Spleen (tissue), 13 donors: ENCODE measurements at regions of chr15 and their contacts with region 1.

Region 1: GRCh38 chr15:84929744-84930371 is 45.4 kb downstream of the SLC28A1 start:
- DNase-seq: no peak
- H3K4me3 ChIP-seq: no peak overlapping the region
- H3K27ac ChIP-seq: no peak overlapping the region
- H3K4me1 ChIP-seq: peaks cover 0 to 11% (median 4%) of the 10 kb centered on the region in 6 donors
- H3K27me3 ChIP-seq: no peaks in the 10 kb centered on the region
- CTCF ChIP-seq: no peak
- POLR2A ChIP-seq: no peak

Region 2: DNA sequence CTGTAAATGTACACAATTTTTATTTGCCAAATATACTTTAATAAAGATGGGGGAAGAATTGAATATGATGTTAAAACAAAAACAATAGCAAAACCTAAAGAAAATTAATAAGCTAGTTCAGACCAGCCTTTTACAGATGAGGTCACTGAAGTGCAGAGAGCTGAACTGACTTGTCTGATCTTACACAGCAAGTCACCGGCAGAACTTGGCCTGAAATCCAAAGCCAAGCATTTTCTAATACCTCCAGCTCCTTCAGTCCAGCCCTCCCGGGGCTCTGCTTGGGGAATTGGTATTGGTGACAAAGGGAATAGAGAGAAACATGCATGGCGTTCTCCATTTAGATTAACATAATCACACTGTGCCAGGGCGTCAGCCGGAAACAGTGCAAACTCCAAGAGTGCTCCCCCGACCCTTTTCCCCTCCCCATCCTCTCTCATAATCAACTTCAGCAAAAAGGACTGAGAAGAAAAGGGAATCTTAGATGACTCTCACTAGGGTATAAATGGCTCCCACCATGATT is 343.2 kb before region 1 on chr15:
- intact Hi-C with region 1: loop called (anchors 2 kb)
- DNase-seq: no peak
- H3K4me3 ChIP-seq: no peak overlapping the region
- H3K27ac ChIP-seq: no peak overlapping the region
- H3K4me1 ChIP-seq: peaks cover 0 to 11% (median 9%) of the 10 kb centered on the region in 6 donors
- H3K27me3 ChIP-seq: peaks cover 0 to 14% (median 0%) of the 10 kb centered on the region in 7 donors
- CTCF ChIP-seq: no peak
- POLR2A ChIP-seq: no peak

Region 3: GRCh38 chr15:84883433-84883832 is 46.4 kb before region 1 on chr15:
- intact Hi-C with region 1: no loop called
- DNase-seq: no peak
- H3K4me3 ChIP-seq: no peak overlapping the region
- H3K27ac ChIP-seq: no peak overlapping the region
- H3K4me1 ChIP-seq: no peaks in the 10 kb centered on the region
- H3K27me3 ChIP-seq: no peaks in the 10 kb centered on the region
- CTCF ChIP-seq: no peak
- POLR2A ChIP-seq: no peak